ENCODE measurements at regions of chr21 and their contacts with region 1.

Region 1: DNA sequence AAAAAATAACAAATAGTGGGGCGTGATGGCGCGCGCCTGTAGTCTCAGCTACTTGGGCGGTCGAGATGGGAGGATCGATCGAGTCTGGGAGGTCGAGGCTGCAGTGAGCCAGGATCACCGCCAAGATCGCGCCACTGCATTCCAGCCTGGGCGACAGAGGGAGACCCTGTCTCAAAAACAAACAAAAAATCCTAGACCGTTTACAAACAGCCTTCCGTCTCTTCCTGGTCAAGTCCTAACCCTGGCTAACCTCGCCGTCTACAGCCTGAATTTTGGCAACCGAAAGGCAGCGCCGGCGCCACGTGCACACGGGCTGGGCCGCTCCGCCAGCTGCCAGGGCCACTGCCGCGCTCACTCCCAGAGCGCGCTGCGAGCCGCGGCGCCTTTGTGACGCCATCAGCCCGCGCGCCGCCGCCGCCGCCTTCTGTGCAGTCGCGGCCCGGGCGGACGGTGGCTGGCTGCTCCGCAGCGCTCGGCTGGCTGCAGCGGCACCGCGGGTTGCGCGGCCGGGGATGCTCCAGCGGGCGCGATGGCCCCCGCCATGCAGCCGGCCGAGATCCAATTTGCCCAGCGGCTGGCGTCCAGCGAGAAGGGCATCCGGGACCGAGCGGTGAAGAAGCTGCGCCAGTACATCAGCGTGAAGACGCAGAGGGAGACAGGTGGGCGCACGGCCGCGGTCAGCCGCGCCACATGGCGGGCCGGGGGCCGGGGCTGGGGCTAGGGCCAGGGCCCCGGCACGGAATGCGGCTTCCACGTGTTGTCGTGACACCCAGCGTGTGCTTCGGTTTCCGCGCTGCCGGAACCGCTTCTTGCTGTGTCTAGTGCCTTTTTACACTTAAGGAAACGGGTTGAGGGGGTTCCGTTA is at the starts of genes HSF2BP and RRP1B:
- DNase-seq: peak; percentile 83
- ATAC-seq: peak; percentile 88
- H3K4me3 Mint-ChIP-seq: peak within 1 kb of the TSS; percentile 99
- H3K27ac Mint-ChIP-seq: peak within 1 kb of the TSS; percentile 97
- H3K4me1 Mint-ChIP-seq: peaks cover 38% of the 10 kb centered on the region
- H3K27me3 Mint-ChIP-seq: no peaks in the 10 kb centered on the region
- CTCF ChIP-seq: no peak
- total RNA-seq, gene HSF2BP: 1.5 TPM
- total RNA-seq, gene RRP1B: 76.7 to 78.5 TPM

Region 2: DNA sequence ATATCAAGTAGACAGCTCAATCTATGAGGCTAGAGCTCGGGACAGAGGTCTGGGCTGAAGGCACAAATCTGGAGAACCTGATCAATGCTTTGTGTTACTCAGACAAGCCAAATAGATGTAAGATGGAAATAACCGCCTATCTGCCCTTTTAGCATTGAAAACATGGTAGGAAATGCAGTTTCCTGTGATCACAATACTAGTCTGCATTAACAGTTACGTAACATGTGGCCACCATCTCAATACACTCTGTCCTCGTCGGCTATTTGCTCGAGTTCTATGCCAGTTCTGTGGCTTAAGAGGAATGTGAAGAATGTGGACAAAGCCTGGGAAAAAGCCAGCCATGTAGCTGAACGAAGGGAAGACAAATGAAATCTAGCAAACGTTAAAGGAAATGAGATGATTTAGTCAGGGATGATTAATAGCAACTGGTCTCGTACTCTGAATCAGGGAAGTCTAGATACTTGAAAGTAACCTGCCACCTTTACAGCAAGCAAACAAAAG is 73.4 kb before region 1 on chr21:
- CTCF ChIA-PET with region 1: no interaction called
- POLR2A ChIA-PET with region 1: no interaction called
- intact Hi-C with region 1: no loop called
- DNase-seq: no peak
- ATAC-seq: no peak
- H3K4me3 Mint-ChIP-seq: no peak overlapping the region
- H3K27ac Mint-ChIP-seq: no peak overlapping the region
- H3K4me1 Mint-ChIP-seq: peaks cover 4% of the 10 kb centered on the region
- H3K27me3 Mint-ChIP-seq: no peaks in the 10 kb centered on the region
- CTCF ChIP-seq: no peak

Region 3: DNA sequence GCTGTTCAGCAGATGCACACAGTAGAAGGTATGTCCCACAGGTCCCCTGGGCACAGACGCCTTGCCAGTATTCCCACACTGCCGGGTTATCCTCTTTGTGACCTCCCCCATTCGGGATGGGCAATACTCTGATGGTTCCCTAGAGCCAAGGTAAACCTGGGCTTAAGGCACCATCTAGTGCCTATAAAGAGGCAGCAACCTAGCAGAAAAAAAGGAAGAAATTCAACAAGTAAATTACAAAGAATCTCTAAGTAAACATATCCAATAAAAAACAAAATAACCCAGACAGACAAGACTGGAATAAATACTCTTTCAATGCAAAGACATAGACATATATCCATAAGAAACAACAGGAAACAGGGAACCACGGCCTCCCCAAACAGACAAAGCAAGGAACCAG is 39.5 kb before region 1 on chr21:
- CTCF ChIA-PET with region 1: no interaction called
- POLR2A ChIA-PET with region 1: no interaction called
- intact Hi-C with region 1: no loop called
- DNase-seq: no peak
- ATAC-seq: no peak
- H3K4me3 Mint-ChIP-seq: no peak overlapping the region
- H3K27ac Mint-ChIP-seq: no peak overlapping the region
- H3K4me1 Mint-ChIP-seq: no peaks in the 10 kb centered on the region
- H3K27me3 Mint-ChIP-seq: no peaks in the 10 kb centered on the region
- CTCF ChIP-seq: no peak

Region 4: GRCh38 chr21:43646550-43647260 is 12.7 kb before region 1 on chr21:
- CTCF ChIA-PET with region 1: interaction called, 10 read pairs
- POLR2A ChIA-PET with region 1: interaction called, 3 read pairs
- intact Hi-C with region 1: no loop called
- DNase-seq: peak; percentile 88
- ATAC-seq: peak; percentile 100
- H3K4me3 Mint-ChIP-seq: no peak overlapping the region
- H3K27ac Mint-ChIP-seq: no peak overlapping the region
- H3K4me1 Mint-ChIP-seq: peaks cover 17% of the 10 kb centered on the region
- H3K27me3 Mint-ChIP-seq: peaks cover 7% of the 10 kb centered on the region
- CTCF ChIP-seq: peak; percentile 99

Region 5: DNA sequence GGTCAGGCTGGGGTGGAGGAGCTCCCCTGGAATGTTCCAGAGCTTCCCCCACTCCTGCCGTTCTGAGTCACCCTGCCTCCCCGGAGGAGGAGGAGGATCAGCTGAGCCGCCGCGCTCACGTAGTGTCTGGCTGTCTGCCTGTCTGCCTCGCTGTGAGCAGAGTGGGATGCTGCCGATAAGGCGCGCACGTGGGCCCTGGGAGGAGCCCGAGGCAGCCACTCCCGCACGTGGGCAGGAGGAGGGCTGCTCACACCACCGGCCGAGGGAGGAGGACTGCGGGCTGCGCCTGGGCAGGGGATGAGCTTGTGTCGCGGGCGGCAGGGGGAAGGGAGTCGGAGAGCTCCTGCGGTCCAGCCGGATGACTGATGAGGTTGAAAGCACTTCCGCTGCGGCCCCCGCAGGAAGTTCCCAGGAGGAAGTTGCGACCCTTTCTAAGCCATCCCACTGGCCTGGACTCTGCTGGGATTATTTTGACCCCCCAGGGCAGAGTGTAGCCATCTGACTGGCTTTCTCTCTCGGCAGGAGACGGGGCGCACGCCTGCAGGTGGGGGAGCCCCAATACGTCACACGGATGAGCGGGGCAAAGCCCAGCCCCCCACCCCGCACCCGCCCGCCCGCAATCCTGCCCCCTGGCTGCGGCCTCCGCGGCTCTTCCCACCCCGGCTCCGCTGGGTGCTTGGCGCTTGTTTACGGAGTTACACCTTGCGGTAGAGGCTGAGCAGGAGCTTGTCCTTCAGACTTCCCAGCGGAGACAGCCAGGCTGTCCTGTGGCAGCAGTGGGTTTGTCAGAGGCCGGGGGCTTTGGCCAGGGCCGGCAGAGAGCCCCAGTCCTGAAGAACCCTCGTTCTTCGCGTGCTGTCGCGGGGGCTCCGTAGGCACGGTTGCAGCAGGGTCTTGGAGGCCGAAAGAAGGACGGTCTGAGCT is 69.4 kb after region 1 on chr21:
- CTCF ChIA-PET with region 1: no interaction called
- POLR2A ChIA-PET with region 1: interaction called, 15 read pairs
- intact Hi-C with region 1: no loop called
- DNase-seq: peak; percentile 91
- ATAC-seq: peak; percentile 88
- H3K4me3 Mint-ChIP-seq: peak overlapping the region; percentile 84
- H3K27ac Mint-ChIP-seq: peak overlapping the region; percentile 88
- H3K4me1 Mint-ChIP-seq: peaks cover 62% of the 10 kb centered on the region
- H3K27me3 Mint-ChIP-seq: no peaks in the 10 kb centered on the region
- CTCF ChIP-seq: peak; percentile 26

Measured in activated CD8-positive, alpha-beta T cell treated with anti-CD3 and anti-CD28 coated beads for 36 hours (primary cell).